Mammary epithelial cell (primary cell): ENCODE measurements at regions of chr6 and their contacts with region 1.

Region 1: DNA sequence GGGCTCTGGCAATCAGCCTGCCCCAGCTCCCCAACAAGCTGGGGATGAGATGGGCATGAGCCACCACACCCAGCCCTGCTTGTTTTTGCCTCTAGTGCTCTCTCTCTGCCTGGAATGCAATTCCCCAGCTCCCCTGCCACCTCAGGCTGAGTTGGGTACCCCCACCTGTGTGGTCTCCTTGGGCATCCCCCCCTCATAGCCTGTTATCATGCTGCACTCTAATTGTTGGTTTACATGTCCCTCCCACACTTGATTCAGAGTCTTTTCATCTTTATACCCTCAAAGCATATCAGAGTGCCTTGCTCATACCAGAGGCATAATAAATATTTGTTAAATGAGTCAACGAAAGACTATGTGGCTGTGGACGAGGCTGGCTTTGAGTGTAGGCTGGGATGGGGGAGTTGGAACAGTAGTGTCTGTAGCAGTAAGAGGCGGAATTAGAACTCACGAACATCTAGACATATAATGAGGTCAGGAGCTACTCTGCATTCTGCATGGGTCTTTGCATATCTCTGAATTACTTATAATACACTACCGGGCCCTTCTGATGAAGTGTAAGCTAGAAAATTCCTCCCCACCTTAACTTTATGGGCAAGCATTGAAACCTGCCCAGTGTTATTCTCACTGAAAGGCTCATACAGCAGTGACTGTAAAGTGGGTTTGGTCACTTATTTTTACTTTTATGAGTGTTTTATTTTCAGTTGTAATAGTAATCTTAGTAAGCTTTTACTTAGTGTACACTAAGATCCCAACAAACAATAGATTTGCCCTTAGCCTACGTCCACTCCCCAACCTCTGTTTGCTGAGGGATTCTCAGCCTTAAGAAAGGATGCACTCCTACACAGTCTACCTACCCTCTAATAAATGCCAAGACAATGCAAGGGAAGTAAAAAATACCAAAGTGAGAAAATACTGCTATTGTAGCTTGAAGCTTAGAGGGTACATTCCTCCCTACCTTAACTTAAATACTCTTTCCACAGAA is 58.7 kb downstream of the EDN1 start:
- DNase-seq: peak; percentile 83
- H3K4me3 ChIP-seq: no peak overlapping the region
- H3K27ac ChIP-seq: peak overlapping the region; percentile 52
- H3K4me1 ChIP-seq: peaks cover 16% of the 10 kb centered on the region
- H3K27me3 ChIP-seq: no peaks in the 10 kb centered on the region
- CTCF ChIP-seq: no peak

Region 2: DNA sequence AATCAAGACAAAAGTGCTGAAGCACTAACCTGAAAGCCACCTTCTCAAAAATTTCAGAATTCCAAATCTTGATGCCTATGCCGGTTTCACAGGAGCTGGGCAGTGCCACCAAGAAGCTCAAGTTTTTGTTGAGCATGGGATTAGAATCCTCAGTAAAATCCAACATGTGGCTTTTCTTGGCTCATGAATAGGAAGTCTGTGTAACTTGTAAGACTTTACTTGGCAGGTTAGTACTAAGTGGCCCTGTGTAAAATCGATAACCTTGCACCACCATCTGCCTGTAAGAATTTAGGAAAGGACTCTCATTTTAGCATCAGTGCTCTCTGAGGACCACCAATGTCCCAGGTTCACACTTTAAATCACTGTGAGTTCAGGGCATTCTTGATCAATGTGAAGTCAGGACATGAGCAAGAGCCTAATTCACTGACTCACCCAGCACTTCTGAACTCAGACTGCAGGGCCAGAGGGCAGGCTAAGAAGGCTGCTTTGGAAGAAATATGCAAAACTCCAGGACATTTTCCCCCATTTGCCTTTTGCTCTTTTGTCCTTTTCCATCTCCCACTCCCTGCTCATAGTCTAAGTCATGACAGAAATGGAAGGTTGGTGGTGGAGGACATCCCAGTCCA is 54.5 kb after region 1 on chr6:
- CTCF ChIA-PET with region 1: no interaction called
- dilution Hi-C with region 1: no loop called
- in situ Hi-C with region 1: no loop called
- intact Hi-C with region 1: no loop called
- DNase-seq: peak; percentile 56
- H3K4me3 ChIP-seq: no peak overlapping the region
- H3K27ac ChIP-seq: no peak overlapping the region
- H3K4me1 ChIP-seq: peaks cover 17% of the 10 kb centered on the region
- H3K27me3 ChIP-seq: no peaks in the 10 kb centered on the region
- CTCF ChIP-seq: peak; percentile 4 to 5

Region 3: DNA sequence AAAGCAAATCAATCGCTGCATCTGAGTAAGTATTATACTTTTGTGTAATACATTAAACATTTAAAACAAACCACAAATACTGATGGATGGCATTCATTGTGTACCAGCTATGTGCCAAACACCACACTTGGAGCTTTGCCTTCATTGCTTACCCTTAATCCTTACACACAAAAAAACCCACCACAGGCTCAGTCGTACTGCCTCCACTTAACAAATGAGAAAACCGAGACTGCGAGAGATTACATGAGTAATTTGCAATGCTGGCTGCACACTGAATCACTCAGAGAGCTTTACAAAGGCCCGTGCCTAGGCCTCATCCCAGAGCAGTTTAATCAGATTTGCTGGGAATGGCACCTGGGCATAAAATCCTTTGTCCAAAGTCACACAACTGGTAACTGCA is 71.8 kb after region 1 on chr6:
- CTCF ChIA-PET with region 1: no interaction called
- dilution Hi-C with region 1: loop called (anchors 5 kb)
- in situ Hi-C with region 1: no loop called
- intact Hi-C with region 1: no loop called
- DNase-seq: peak; percentile 90
- H3K4me3 ChIP-seq: no peak overlapping the region
- H3K27ac ChIP-seq: peak overlapping the region; percentile 41
- H3K4me1 ChIP-seq: peaks cover 10% of the 10 kb centered on the region
- H3K27me3 ChIP-seq: no peaks in the 10 kb centered on the region
- CTCF ChIP-seq: no peak